ENCODE measurements at regions of chr16 and their contacts with region 1.

Region 1: DNA sequence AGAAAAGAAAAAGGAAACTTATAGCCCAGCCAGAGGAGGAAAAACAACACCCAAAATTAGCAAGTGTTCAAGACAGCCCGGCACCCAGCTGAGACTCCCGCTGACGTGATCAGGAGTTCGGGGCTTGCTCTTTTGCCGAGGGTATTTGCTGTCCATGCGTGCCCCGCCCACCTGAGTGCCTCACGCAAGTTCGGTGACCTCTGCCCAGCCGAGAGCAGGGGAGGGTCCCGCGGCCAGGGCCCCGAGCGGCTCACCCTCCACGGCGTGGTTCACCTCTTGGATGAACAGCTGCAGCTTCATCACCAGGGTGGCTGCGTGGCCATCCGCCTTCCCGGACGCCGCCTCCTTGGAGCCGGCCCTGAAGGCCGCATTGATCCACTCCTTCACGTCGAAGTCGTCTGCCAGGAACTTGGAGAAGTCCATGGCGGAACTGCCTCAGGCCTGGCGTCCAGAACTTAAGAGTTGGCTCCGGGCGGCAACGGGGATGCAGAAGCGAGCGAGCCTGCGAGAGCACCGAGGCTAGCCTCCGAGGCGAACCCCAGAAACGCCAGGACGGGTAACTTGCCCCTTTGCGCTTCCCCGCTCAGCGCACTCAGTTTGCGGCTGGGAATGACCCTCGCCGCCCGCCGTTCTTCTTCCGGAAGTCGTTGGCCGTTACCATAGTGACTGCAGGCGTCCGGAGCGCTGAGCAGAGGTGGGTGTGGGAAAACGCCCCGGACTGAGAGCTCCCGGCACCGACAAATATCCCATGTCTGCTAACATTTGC is at the start of gene COG7:
- DNase-seq: peak; percentile 96
- H3K4me3 Mint-ChIP-seq: peak within 1 kb of the TSS; percentile 98
- H3K27ac Mint-ChIP-seq: peak within 1 kb of the TSS; percentile 95
- H3K4me1 Mint-ChIP-seq: peaks cover 16% of the 10 kb centered on the region
- H3K27me3 Mint-ChIP-seq: no peaks in the 10 kb centered on the region
- total RNA-seq, gene COG7: 21.6 and 25.6 TPM in 2 replicates

Region 2: GRCh38 chr16:23491490-23492391 is 39.0 kb after region 1 on chr16:
- intact Hi-C with region 1: no loop called
- DNase-seq: no peak
- H3K4me3 Mint-ChIP-seq: no peak overlapping the region
- H3K27ac Mint-ChIP-seq: peak overlapping the region; percentile 48
- H3K4me1 Mint-ChIP-seq: peaks cover 2% of the 10 kb centered on the region
- H3K27me3 Mint-ChIP-seq: no peaks in the 10 kb centered on the region

Region 3: DNA sequence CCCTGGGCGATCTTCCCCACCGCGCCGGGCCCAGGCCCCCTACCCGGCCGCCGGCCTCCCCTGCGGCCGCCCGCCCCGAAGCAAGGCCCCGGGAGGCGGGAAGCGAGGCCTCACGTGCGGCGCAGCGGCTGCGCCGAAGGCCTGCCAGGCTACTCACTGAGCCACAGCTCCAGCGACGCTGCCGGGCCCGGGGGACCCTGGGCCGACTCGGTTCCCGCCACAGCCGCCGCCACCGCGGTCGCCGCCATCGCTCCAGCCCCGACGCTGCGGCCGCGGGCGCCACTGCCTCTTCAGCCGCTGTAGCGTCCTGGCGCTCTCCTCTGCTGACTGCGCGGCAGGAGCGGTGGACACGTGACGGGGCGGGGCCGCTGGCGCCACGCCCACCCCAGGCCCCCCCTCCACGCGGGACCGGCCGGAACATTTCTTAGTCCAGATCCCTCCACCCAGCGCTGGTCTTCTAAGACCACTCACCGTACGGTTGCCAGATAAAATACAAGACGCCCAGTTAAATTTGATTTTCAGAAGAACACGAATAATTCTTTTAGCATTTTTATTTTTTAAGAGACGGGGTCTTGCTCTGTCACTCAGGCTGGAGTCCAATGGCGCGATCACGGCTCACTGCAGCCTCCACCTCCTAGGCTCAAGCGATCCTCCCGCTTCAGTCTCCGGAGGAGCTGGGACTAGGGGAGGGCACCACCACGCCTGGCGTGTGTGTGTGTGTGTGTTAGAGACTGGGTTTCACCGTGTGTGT is 57.6 kb after region 1 on chr16 and contains the start of gene GGA2:
- intact Hi-C with region 1: loop called (anchors 1 kb)
- DNase-seq: peak; percentile 94
- H3K4me3 Mint-ChIP-seq: peak within 1 kb of the TSS; percentile 91
- H3K27ac Mint-ChIP-seq: peak within 1 kb of the TSS; percentile 95
- H3K4me1 Mint-ChIP-seq: peaks cover 51% of the 10 kb centered on the region
- H3K27me3 Mint-ChIP-seq: no peaks in the 10 kb centered on the region
- total RNA-seq, gene GGA2: 109 and 113 TPM in 2 replicates